Panc1 (cell line): ENCODE measurements at regions of chr10 and their contacts with region 1.

Region 1: GRCh38 chr10:84360637-84361365 is 32.4 kb downstream of the CCSER2 start:
- DNase-seq: no peak
- ATAC-seq: peak; percentile 87
- H3K4me3 ChIP-seq: peak overlapping the region; percentile 29 to 56
- H3K27ac ChIP-seq: peak overlapping the region; percentile 78
- H3K4me1 ChIP-seq: peaks cover 13% of the 10 kb centered on the region; the same call in 1 of the 2 replicates
- H3K27me3 ChIP-seq: no peaks in the 10 kb centered on the region
- CTCF ChIP-seq: no peak

Region 2: DNA sequence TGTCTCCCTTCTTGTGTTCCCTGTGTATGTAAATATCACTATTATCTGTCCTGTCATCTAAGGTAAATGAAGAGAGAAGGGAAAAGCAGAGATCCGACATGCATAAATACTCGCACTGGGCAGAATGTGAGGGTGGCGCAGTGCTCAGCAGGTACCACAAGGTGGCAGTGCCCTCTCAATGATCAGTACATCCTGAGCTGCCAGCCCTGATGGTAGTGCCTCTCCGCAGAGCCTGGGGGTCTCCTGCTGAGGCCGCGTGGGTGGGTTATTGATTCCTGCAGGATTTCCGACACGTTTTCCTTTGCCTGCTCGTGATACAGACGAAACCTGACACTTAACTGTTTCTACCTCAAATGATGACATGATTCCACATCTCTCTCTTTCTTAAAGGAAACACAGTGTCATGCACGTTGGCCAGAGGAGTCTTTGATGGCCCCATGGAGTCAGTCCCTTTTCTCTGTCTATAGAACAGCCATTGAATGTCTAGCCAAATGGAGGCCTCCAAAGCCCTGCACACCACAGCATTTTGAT is 96.1 kb before region 1 on chr10:
- CTCF ChIA-PET with region 1: interaction called, 3 read pairs
- POLR2A ChIA-PET with region 1: no interaction called
- in situ Hi-C with region 1: no loop called
- intact Hi-C with region 1: loop called (anchors 5 kb)
- DNase-seq: peak; percentile 73
- ATAC-seq: peak; percentile 96
- H3K4me3 ChIP-seq: no peak overlapping the region
- H3K27ac ChIP-seq: no peak overlapping the region
- H3K4me1 ChIP-seq: no peaks in the 10 kb centered on the region
- H3K27me3 ChIP-seq: peaks cover 3% of the 10 kb centered on the region; the same call in 1 of the 2 replicates
- CTCF ChIP-seq: peak; percentile 98

Region 3: GRCh38 chr10:84397735-84398144 is 36.9 kb after region 1 on chr10:
- CTCF ChIA-PET with region 1: interaction called, 11 read pairs
- POLR2A ChIA-PET with region 1: no interaction called
- in situ Hi-C with region 1: no loop called
- intact Hi-C with region 1: no loop called
- DNase-seq: no peak
- ATAC-seq: no peak
- H3K4me3 ChIP-seq: no peak overlapping the region
- H3K27ac ChIP-seq: no peak overlapping the region
- H3K4me1 ChIP-seq: no peaks in the 10 kb centered on the region
- H3K27me3 ChIP-seq: no peaks in the 10 kb centered on the region
- CTCF ChIP-seq: no peak

Region 4: GRCh38 chr10:84499846-84500245 is 139.0 kb after region 1 on chr10:
- CTCF ChIA-PET with region 1: no interaction called
- POLR2A ChIA-PET with region 1: interaction called, 15 read pairs
- in situ Hi-C with region 1: no loop called
- intact Hi-C with region 1: no loop called
- DNase-seq: no peak
- ATAC-seq: no peak
- H3K4me3 ChIP-seq: no peak overlapping the region
- H3K27ac ChIP-seq: no peak overlapping the region
- H3K4me1 ChIP-seq: no peaks in the 10 kb centered on the region
- H3K27me3 ChIP-seq: no peaks in the 10 kb centered on the region
- CTCF ChIP-seq: no peak